ENCODE measurements at regions of chr18 and their contacts with region 1.

Region 1: GRCh38 chr18:42670860-42671259 is 444.6 kb downstream of the RIT2 start:
- DNase-seq: no peak
- ATAC-seq: no peak
- H3K4me3 ChIP-seq: no peak overlapping the region
- H3K4me3 Mint-ChIP-seq: no peak overlapping the region
- H3K27ac ChIP-seq: no peak overlapping the region
- H3K27ac Mint-ChIP-seq: no peak overlapping the region
- H3K4me1 ChIP-seq: no peaks in the 10 kb centered on the region
- H3K4me1 Mint-ChIP-seq: no peaks in the 10 kb centered on the region
- H3K27me3 ChIP-seq: no peaks in the 10 kb centered on the region
- H3K27me3 Mint-ChIP-seq: no peaks in the 10 kb centered on the region
- CTCF ChIP-seq: no peak

Region 2: GRCh38 chr18:42072407-42072806 is 598.5 kb before region 1 on chr18:
- CTCF ChIA-PET with region 1: no interaction called
- POLR2A ChIA-PET with region 1: no interaction called
- intact Hi-C with region 1: no loop called
- DNase-seq: no peak
- ATAC-seq: no peak
- H3K4me3 ChIP-seq: no peak overlapping the region
- H3K4me3 Mint-ChIP-seq: no peak overlapping the region
- H3K27ac ChIP-seq: no peak overlapping the region
- H3K27ac Mint-ChIP-seq: no peak overlapping the region
- H3K4me1 ChIP-seq: no peaks in the 10 kb centered on the region
- H3K4me1 Mint-ChIP-seq: no peaks in the 10 kb centered on the region
- H3K27me3 ChIP-seq: no peaks in the 10 kb centered on the region
- H3K27me3 Mint-ChIP-seq: no peaks in the 10 kb centered on the region
- CTCF ChIP-seq: no peak

Region 3: DNA sequence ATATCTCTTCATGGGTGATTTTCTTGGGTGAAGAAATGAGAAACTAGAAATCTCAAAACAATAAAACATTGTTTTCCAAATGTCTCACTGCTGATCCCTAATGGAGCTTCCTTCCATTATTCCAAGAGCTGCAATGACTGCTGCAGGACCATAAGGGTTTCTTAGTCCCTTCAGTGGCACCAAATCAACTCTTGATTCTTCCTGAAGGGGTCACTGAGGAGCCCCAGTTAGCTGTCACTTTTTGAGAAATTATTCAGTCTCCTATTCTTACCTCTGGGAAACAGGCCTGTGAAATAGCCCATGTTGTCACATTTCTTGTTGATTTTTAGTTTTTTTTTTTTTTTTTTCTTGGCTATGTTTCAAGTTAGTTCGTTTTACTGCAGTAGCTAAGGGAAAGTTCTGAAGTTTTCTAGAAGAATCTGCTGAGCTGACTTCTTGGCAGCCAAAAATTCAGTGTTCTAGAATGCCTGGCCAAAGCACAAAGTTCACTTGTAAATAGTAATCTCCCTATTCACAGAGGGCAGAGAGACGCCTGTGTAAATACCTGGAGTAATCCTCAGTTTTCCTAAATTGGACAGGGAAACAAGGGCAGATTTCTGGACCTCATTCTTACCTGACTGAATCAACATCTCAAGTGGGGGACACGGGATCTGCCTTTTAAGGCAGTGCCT is 35.3 kb before region 1 on chr18:
- CTCF ChIA-PET with region 1: no interaction called
- POLR2A ChIA-PET with region 1: no interaction called
- intact Hi-C with region 1: no loop called
- DNase-seq: no peak
- ATAC-seq: no peak
- H3K4me3 ChIP-seq: no peak overlapping the region
- H3K4me3 Mint-ChIP-seq: no peak overlapping the region
- H3K27ac ChIP-seq: no peak overlapping the region
- H3K27ac Mint-ChIP-seq: no peak overlapping the region
- H3K4me1 ChIP-seq: no peaks in the 10 kb centered on the region
- H3K4me1 Mint-ChIP-seq: no peaks in the 10 kb centered on the region
- H3K27me3 ChIP-seq: no peaks in the 10 kb centered on the region
- H3K27me3 Mint-ChIP-seq: no peaks in the 10 kb centered on the region
- CTCF ChIP-seq: no peak

Region 4: DNA sequence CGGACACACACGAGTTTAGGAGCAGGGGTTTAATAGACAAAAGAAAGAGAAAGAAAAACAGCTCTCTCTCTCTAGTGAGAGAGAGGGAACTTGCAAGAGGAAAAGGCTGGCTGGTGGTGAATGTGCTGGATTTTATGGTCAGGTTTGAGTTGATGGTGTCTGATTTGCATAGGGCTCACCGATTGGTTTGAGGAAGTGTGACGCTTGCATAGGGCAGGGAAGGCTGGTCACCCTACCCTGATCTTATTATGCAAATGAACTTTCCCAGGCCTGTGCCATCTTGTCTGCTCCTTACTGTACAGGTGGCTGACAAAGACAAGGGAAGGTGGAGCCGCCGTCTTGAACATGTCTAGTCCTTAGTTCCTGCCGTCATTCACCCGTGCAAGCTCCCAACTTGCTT is 35.8 kb after region 1 on chr18:
- CTCF ChIA-PET with region 1: no interaction called
- POLR2A ChIA-PET with region 1: no interaction called
- intact Hi-C with region 1: loop called in 1 of 2 experiments (anchors 2 kb)
- DNase-seq: peak in 1 of 9 experiments; percentile 4
- ATAC-seq: no peak
- H3K4me3 ChIP-seq: no peak overlapping the region
- H3K4me3 Mint-ChIP-seq: no peak overlapping the region
- H3K27ac ChIP-seq: no peak overlapping the region
- H3K27ac Mint-ChIP-seq: no peak overlapping the region
- H3K4me1 ChIP-seq: no peaks in the 10 kb centered on the region
- H3K4me1 Mint-ChIP-seq: no peaks in the 10 kb centered on the region
- H3K27me3 ChIP-seq: no peaks in the 10 kb centered on the region
- H3K27me3 Mint-ChIP-seq: no peaks in the 10 kb centered on the region
- CTCF ChIP-seq: no peak

Region 5: GRCh38 chr18:42742969-42743368 is 72.1 kb after region 1 on chr18:
- CTCF ChIA-PET with region 1: no interaction called
- POLR2A ChIA-PET with region 1: no interaction called
- intact Hi-C with region 1: no loop called
- DNase-seq: no peak
- ATAC-seq: no peak
- H3K4me3 ChIP-seq: no peak overlapping the region
- H3K4me3 Mint-ChIP-seq: no peak overlapping the region
- H3K27ac ChIP-seq: no peak overlapping the region
- H3K27ac Mint-ChIP-seq: no peak overlapping the region
- H3K4me1 ChIP-seq: no peaks in the 10 kb centered on the region
- H3K4me1 Mint-ChIP-seq: no peaks in the 10 kb centered on the region
- H3K27me3 ChIP-seq: no peaks in the 10 kb centered on the region
- H3K27me3 Mint-ChIP-seq: no peaks in the 10 kb centered on the region
- CTCF ChIP-seq: no peak